Right lobe of liver (tissue), 6 donors: ENCODE measurements at regions of chr2 and their contacts with region 1.

Region 1: DNA sequence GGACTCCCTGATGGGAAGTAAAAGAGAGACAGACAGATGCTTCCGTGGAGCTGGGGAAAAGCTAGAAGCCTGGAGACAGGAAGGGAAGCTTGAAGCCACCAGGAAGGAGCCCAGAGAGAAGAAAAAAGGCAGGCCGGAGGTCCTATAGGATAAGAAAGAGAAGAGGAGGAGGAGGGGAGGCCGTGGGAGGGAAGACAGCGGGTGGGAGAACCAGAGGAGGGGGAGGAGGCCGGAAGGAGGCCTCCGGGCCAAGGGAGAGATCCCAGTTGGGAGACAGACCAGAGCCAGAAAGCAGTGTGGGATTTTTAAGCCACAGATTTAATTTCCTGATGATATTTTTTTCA is 107.1 kb upstream of the PKDCC start:
- DNase-seq: no peak
- ATAC-seq: peak in 3 of 4 donors; percentile 24 to 39 (median 26)
- H3K4me3 ChIP-seq: no peak overlapping the region
- H3K27ac ChIP-seq: no peak overlapping the region
- H3K4me1 ChIP-seq: no peaks in the 10 kb centered on the region
- H3K27me3 ChIP-seq: no peaks in the 10 kb centered on the region
- CTCF ChIP-seq: no peak
- POLR2A ChIP-seq: no peak

Region 2: DNA sequence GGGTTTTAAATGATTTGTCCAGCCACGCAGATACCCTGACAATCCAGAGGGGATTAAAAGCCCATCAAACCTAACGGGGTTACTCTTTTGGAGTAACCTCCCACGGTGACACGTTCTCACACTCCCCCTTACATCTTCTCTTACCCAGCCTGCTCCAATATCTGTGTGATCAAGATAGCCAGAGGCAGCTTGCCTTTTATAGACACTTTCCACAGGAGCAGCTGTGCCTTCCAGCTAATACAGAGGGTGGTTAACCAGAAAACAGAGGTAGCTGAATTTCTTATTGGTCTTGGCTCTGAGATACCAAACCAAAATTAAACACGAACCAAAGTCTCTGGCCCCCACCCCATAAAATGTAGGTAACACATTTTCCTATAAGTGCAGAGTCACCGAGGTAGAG is 125.8 kb before region 1 on chr2:
- intact Hi-C with region 1: loop called in 1 of 2 experiments (anchors 5 kb)
- DNase-seq: no peak
- ATAC-seq: no peak
- H3K4me3 ChIP-seq: no peak overlapping the region
- H3K27ac ChIP-seq: no peak overlapping the region
- H3K4me1 ChIP-seq: no peaks in the 10 kb centered on the region
- H3K27me3 ChIP-seq: no peaks in the 10 kb centered on the region
- CTCF ChIP-seq: no peak
- POLR2A ChIP-seq: no peak